ENCODE measurements at regions of chr16 and their contacts with region 1.

Region 1: DNA sequence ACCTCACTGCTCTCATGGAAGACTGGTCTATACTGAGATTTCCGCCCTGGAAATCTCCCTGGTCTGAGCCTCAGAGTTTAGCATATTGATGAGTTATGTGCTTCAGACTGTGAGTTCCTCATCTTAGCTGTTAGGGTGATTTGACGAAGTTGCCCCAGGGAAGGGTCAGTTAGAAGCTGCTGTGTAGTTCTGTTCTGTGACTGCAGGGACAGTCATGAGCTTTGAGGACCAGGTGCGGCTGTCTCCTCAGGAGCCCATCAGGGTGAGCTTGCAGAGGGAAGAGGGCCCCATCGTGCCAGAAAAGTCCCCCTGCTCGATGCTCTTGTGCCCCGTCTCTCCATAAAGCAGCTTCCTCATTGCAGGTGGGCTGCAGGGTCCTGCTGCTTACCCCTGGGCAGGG is 28.3 kb upstream of the IL17C start:
- DNase-seq: no peak
- H3K4me3 ChIP-seq: no peak overlapping the region
- H3K27ac ChIP-seq: no peak overlapping the region
- H3K4me1 ChIP-seq: peaks cover 0 to 10% (median 4%) of the 10 kb centered on the region in 4 experiments; a peak in 3 of 7 replicates
- H3K27me3 ChIP-seq: no peaks in the 10 kb centered on the region
- CTCF ChIP-seq: peak; percentile 44 to 71 (median 48)
- EP300 ChIP-seq: no peak
- POLR2A ChIP-seq: no peak
- RAD21 ChIP-seq: peak; percentile 39 to 58

Region 2: DNA sequence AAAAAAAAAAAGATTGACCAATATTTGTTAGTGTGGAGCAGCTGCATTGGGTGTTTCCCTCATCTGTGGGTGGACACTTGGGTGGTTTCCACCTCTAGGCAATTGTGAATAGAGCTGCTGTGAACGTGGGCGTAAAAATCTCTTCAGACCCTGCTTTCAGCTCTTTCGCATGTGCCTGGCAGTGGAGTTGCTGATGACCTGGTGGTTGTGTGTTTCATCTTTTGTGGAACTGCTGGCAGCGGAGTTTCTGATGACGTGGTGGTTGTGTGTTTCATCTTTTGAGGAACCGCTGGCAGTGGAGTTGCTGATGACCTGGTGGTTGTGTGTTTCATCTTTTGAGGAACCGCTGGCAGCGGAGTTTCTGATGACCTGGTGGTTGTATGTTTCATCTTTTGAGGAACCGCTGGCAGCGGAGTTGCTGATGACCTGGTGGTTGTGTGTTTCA is 18.5 kb before region 1 on chr16:
- CTCF ChIA-PET with region 1: interaction called, 11 read pairs
- POLR2A ChIA-PET with region 1: no interaction called
- DNase-seq: no peak
- H3K4me3 ChIP-seq: no peak overlapping the region
- H3K27ac ChIP-seq: no peak overlapping the region
- H3K4me1 ChIP-seq: no peaks in the 10 kb centered on the region
- H3K27me3 ChIP-seq: no peaks in the 10 kb centered on the region
- CTCF ChIP-seq: no peak
- EP300 ChIP-seq: no peak
- POLR2A ChIP-seq: no peak
- RAD21 ChIP-seq: no peak

Region 3: DNA sequence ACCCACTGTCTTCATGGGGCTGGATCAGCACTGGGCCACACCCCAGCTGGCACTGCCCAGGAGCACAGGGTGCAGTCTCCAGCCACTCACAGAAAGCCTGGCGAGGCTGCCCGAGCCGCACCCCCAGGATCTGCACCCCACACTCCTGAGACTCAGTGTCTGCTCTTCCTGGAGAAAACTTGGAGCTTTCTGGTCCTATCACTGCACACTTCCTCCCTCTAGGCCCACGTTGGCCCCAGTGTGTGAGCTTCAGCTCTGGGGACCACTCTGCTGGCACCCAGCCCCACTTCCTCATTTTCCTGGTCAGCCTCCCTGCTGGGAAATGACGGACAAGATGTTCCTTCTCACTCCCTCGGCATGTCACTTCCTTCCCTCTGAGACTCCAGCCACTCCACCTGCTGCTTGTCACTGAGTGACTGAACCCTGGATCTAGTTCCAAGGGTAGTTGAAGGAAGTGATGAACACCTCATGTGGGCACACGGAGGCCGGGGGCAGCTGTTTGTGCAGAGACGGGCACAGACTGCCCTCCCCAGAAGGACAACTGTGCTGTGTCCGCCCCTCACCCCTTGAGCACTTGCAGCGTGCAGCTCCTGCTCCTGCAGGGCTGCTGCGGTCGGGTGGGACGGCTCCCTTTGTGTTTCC is 10.9 kb before region 1 on chr16:
- CTCF ChIA-PET with region 1: interaction called, 17 read pairs
- POLR2A ChIA-PET with region 1: interaction called, 3 read pairs
- DNase-seq: no peak
- H3K4me3 ChIP-seq: no peak overlapping the region
- H3K27ac ChIP-seq: no peak overlapping the region
- H3K4me1 ChIP-seq: peaks cover 0 to 3% (median 0%) of the 10 kb centered on the region in 4 experiments; a peak in 3 of 7 replicates
- H3K27me3 ChIP-seq: no peaks in the 10 kb centered on the region
- CTCF ChIP-seq: no peak
- EP300 ChIP-seq: no peak
- POLR2A ChIP-seq: no peak
- RAD21 ChIP-seq: no peak

Region 4: DNA sequence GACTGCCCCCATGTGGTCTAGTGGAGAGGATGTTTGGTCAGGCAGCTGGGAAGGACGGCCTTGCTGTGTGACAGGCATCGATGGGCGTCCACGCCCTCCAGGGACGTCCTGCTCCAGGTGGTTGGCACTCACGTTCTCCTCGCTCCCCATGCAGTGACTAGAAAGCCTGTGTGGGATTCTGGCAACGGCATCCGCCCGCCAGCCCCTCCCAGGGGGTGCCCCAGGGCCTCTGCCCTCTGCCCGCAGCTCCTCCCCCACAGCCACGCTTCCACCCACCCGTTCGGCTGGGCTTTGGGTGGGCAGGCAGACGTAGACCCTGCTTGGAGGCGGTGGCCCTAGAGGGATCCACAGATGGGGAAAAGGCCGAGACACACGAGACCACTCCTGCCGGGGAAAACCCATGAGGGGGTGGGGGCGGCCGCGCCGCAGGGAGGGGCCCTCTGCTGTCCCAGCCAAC is 23.6 kb after region 1 on chr16:
- CTCF ChIA-PET with region 1: interaction called, 89 read pairs
- POLR2A ChIA-PET with region 1: interaction called, 11 read pairs
- DNase-seq: peak in 1 of 2 experiments; percentile 73
- H3K4me3 ChIP-seq: peak overlapping the region; percentile 39 to 72 (median 48); a peak in 6 of 8 replicates
- H3K27ac ChIP-seq: no peak overlapping the region
- H3K4me1 ChIP-seq: peaks cover 1 to 32% (median 16%) of the 10 kb centered on the region in 4 experiments
- H3K27me3 ChIP-seq: peaks cover 0 to 4% (median 0%) of the 10 kb centered on the region in 4 experiments; a peak in 2 of 7 replicates
- CTCF ChIP-seq: peak; percentile 62 to 79 (median 77)
- EP300 ChIP-seq: no peak
- POLR2A ChIP-seq: no peak
- RAD21 ChIP-seq: peak; percentile 49 to 59; a peak in 3 of 4 replicates

Region 5: GRCh38 chr16:88672776-88673175 is 62.7 kb after region 1 on chr16:
- CTCF ChIA-PET with region 1: interaction called, 11 read pairs
- POLR2A ChIA-PET with region 1: no interaction called
- DNase-seq: peak; percentile 58 to 83
- H3K4me3 ChIP-seq: no peak overlapping the region
- H3K27ac ChIP-seq: no peak overlapping the region
- H3K4me1 ChIP-seq: peaks cover 0 to 5% (median 3%) of the 10 kb centered on the region in 4 experiments; a peak in 4 of 7 replicates
- H3K27me3 ChIP-seq: no peaks in the 10 kb centered on the region
- CTCF ChIP-seq: peak; percentile 77 to 92 (median 90)
- EP300 ChIP-seq: no peak
- POLR2A ChIP-seq: no peak
- RAD21 ChIP-seq: peak; percentile 50 to 60

Measured in H1 (cell line).